ENCODE measurements at regions of chr10 and their contacts with region 1.

Region 1: GRCh38 chr10:13180788-13181187 is 19.4 kb downstream of the MCM10 start:
- DNase-seq: no peak
- H3K4me3 ChIP-seq: no peak overlapping the region
- H3K27ac ChIP-seq: no peak overlapping the region
- H3K4me1 ChIP-seq: no peaks in the 10 kb centered on the region
- H3K27me3 ChIP-seq: no peaks in the 10 kb centered on the region
- CTCF ChIP-seq: no peak
- EP300 ChIP-seq: no peak
- RAD21 ChIP-seq: no peak

Region 2: GRCh38 chr10:13160934-13161856 is 19.6 kb before region 1 on chr10 and contains the start of gene MCM10:
- CTCF ChIA-PET with region 1: interaction called, 11 read pairs
- POLR2A ChIA-PET with region 1: no interaction called
- DNase-seq: peak; percentile 96
- H3K4me3 ChIP-seq: peak within 1 kb of the TSS; percentile 73 to 74
- H3K27ac ChIP-seq: peak within 1 kb of the TSS in 1 of 2 experiments; percentile 58; a peak in 1 of 4 replicates
- H3K4me1 ChIP-seq: peaks cover 0 to 9% of the 10 kb centered on the region in 2 experiments; a peak in 2 of 4 replicates
- H3K27me3 ChIP-seq: no peaks in the 10 kb centered on the region
- CTCF ChIP-seq: peak; percentile 83
- EP300 ChIP-seq: peak in 1 of 2 experiments; percentile 17; a peak in 1 of 4 replicates
- RAD21 ChIP-seq: peak; percentile 80
- polyA plus RNA-seq, gene MCM10: 5.1 and 5.5 TPM in 2 replicates

Measured in SK-N-SH (cell line).